ENCODE measurements at regions of chr1 and their contacts with region 1.

Region 1: GRCh38 chr1:12113433-12114339 is 50.6 kb downstream of the TNFRSF8 start:
- DNase-seq: no peak
- H3K4me3 ChIP-seq: no peak overlapping the region
- H3K27ac ChIP-seq: no peak overlapping the region
- H3K4me1 ChIP-seq: no peaks in the 10 kb centered on the region
- H3K27me3 ChIP-seq: no peaks in the 10 kb centered on the region
- CTCF ChIP-seq: no peak

Region 2: GRCh38 chr1:12067900-12068821 is 45.5 kb before region 1 on chr1:
- CTCF ChIA-PET with region 1: no interaction called
- POLR2A ChIA-PET with region 1: no interaction called
- intact Hi-C with region 1: no loop called
- DNase-seq: no peak
- H3K4me3 ChIP-seq: no peak overlapping the region
- H3K27ac ChIP-seq: no peak overlapping the region
- H3K4me1 ChIP-seq: no peaks in the 10 kb centered on the region
- H3K27me3 ChIP-seq: peaks cover 23% of the 10 kb centered on the region
- CTCF ChIP-seq: no peak

Region 3: DNA sequence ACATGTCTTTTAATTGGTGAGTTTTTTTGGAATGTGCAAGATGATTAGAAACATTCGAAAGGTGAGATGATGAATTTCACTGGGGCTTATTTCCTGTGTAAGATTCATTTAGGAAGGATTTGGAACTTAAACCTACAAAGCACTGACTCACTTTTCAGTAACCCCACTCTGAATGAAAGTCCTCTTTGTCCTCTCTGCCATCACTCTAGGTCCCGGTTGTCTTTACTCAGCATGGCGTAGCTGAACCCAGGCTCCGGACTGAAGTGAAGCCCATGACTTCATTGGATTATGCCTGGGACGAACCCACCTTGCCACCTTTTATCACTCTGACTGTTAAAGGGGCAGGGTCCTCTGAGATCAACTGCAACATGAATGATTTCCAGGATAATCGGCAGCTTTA is 255.6 kb after region 1 on chr1:
- CTCF ChIA-PET with region 1: no interaction called
- POLR2A ChIA-PET with region 1: no interaction called
- intact Hi-C with region 1: no loop called
- DNase-seq: no peak
- H3K4me3 ChIP-seq: no peak overlapping the region
- H3K27ac ChIP-seq: no peak overlapping the region
- H3K4me1 ChIP-seq: no peaks in the 10 kb centered on the region
- H3K27me3 ChIP-seq: no peaks in the 10 kb centered on the region
- CTCF ChIP-seq: no peak

Region 4: GRCh38 chr1:12778907-12779306 is 665.2 kb after region 1 on chr1:
- CTCF ChIA-PET with region 1: no interaction called
- POLR2A ChIA-PET with region 1: no interaction called
- intact Hi-C with region 1: loop called (anchors 10 kb)
- DNase-seq: no peak
- H3K4me3 ChIP-seq: no peak overlapping the region
- H3K27ac ChIP-seq: no peak overlapping the region
- H3K4me1 ChIP-seq: no peaks in the 10 kb centered on the region
- H3K27me3 ChIP-seq: 0 out of 2 replicates have a peak, but pooled peaks cover 6% of the 10 kb centered on the region
- CTCF ChIP-seq: no peak